Aorta (tissue), 5 donors: ENCODE measurements at regions of chr4 and their contacts with region 1.

Region 1: GRCh38 chr4:115234405-115235093 is 121.1 kb upstream of the NDST4 start:
- DNase-seq: no peak
- ATAC-seq: no peak
- H3K4me3 ChIP-seq: no peak overlapping the region
- H3K27ac ChIP-seq: no peak overlapping the region
- H3K4me1 ChIP-seq: no peaks in the 10 kb centered on the region
- H3K27me3 ChIP-seq: no peaks in the 10 kb centered on the region

Region 2: GRCh38 chr4:115537387-115537786 is 302.8 kb after region 1 on chr4:
- intact Hi-C with region 1: loop called (anchors 5 to 10 kb)
- DNase-seq: no peak
- ATAC-seq: no peak
- H3K4me3 ChIP-seq: no peak overlapping the region
- H3K27ac ChIP-seq: no peak overlapping the region
- H3K4me1 ChIP-seq: no peaks in the 10 kb centered on the region
- H3K27me3 ChIP-seq: no peaks in the 10 kb centered on the region

Region 3: DNA sequence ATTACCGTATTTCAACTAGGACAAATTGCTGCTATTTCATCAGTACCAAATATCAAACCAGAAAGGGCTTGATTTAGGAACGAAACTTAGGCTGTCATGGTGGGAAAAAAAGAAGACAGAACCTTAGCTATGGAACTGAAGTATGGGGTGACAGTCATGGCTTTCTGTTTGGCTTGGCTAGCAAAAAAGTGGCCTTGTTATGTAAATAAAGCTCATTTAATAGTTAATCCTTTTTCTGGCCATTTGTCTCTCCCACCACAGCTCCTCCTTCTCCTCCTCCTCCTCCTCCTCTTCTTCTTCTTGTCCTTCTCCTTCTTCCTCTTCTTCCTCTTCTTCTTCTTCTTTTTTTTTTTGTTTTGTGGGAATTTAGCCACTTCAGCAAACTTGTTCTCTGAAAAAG is 313.6 kb after region 1 on chr4:
- intact Hi-C with region 1: loop called in 1 of 2 experiments (anchors 10 kb)
- DNase-seq: no peak
- ATAC-seq: no peak
- H3K4me3 ChIP-seq: no peak overlapping the region
- H3K27ac ChIP-seq: no peak overlapping the region
- H3K4me1 ChIP-seq: no peaks in the 10 kb centered on the region
- H3K27me3 ChIP-seq: no peaks in the 10 kb centered on the region